ENCODE measurements at regions of chr1 and their contacts with region 1.

Region 1: DNA sequence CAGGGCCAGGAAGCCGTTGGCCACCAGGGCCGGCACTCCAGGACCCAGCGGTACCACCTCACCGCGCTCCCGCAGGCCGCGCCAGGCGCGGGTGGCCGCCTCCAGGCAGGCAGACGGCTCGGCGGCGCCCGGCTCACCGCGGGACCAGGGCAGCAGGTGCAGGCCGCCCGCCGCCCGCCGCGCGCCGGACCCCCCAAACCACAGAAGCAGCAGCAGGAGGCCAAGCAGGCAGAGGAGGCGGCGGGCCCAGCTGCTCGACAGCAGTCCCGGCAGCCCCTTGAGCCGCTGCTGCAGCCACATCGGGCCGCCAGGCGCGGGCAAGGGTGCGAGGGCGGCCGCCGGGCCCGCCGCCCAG is 312 bp downstream of the KIAA2013 start:
- DNase-seq: no peak

Region 2: GRCh38 chr1:11907275-11908094 is 18.4 kb before region 1 on chr1:
- intact Hi-C with region 1: loop called (anchors 2 kb)
- DNase-seq: peak; percentile 94